Uterus (tissue), 4 donors: ENCODE measurements at regions of chr19 and their contacts with region 1.

Region 1: GRCh38 chr19:55599468-55600279 is at the start of gene FIZ1:
- DNase-seq: peak; percentile 99
- H3K4me3 ChIP-seq: peak within 1 kb of the TSS; percentile 82 to 87
- H3K27ac ChIP-seq: peak within 1 kb of the TSS; percentile 94 to 99
- H3K4me1 ChIP-seq: peaks cover 0 to 11% of the 10 kb centered on the region in 2 donors
- H3K27me3 ChIP-seq: no peaks in the 10 kb centered on the region
- CTCF ChIP-seq: peak in 2 of 4 experiments; percentile 23 to 33
- POLR2A ChIP-seq: peak in 1 of 2 donors; percentile 38
- total RNA-seq, gene FIZ1: 0.26 to 19.3 (median 2.4) TPM

Region 2: GRCh38 chr19:55407800-55408532 is 191.7 kb before region 1 on chr19:
- intact Hi-C with region 1: no loop called
- DNase-seq: peak; percentile 98
- H3K4me3 ChIP-seq: peak overlapping the region; percentile 90 to 93
- H3K27ac ChIP-seq: peak overlapping the region; percentile 95 to 98
- H3K4me1 ChIP-seq: peaks cover 0 to 7% of the 10 kb centered on the region in 2 donors
- H3K27me3 ChIP-seq: no peaks in the 10 kb centered on the region
- CTCF ChIP-seq: peak in 1 of 4 experiments; percentile 6
- POLR2A ChIP-seq: no peak

Region 3: DNA sequence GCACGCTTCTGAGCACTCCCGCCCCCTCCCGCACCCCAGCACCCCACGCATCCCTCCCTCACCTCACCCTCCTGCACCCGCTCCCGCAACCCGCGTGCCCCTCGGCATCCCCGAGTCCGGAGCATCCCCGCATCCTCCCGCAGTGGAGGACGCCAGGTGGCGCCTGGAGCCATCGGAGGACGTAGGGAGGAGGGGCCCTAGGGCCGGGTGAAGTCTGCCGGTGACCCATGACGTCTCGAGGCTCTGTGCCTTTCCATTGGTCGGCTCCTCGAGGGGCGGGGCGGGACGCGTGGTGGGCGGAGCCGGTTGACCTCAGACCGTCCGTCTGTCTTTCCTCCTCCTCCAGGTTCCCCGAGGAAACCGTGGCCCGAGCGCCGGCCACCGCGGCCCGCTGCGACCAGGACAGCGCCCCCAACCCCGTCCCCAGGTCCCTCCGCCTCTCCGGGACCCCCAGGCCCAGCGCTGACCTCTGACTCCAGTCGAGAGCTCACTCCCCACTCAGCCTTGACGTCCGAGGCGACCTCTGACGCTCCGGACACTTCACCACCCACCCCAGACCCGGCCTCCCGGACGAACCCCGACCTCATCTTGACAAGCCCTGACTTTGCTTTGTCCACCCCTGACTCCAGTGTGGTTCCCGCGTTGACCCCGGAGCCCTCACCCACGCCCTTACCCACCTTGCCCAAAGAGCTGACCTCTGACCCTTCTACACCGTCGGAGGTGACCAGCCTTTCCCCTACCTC is 82.6 kb before region 1 on chr19:
- intact Hi-C with region 1: loop called (anchors 10 kb)
- DNase-seq: peak; percentile 92 to 94
- H3K4me3 ChIP-seq: peak overlapping the region; percentile 22 to 44
- H3K27ac ChIP-seq: peak overlapping the region; percentile 86 to 93
- H3K4me1 ChIP-seq: peaks cover 0 to 4% of the 10 kb centered on the region in 2 donors
- H3K27me3 ChIP-seq: no peaks in the 10 kb centered on the region
- CTCF ChIP-seq: peak; percentile 90 to 99 (median 94)
- POLR2A ChIP-seq: peak in 1 of 2 donors; percentile 58